ENCODE measurements at regions of chrX and their contacts with region 1.

Region 1: GRCh38 chrX:40013266-40014195 is 84.2 kb downstream of the BCOR start:
- DNase-seq: peak; percentile 81
- ATAC-seq: peak; percentile 77

Region 2: GRCh38 chrX:39258331-39258730 is 755.2 kb before region 1 on chrX:
- intact Hi-C with region 1: no loop called
- DNase-seq: no peak
- ATAC-seq: peak; percentile 55

Region 3: GRCh38 chrX:40058719-40059118 is 45.2 kb after region 1 on chrX:
- intact Hi-C with region 1: no loop called
- DNase-seq: no peak
- ATAC-seq: no peak

Region 4: DNA sequence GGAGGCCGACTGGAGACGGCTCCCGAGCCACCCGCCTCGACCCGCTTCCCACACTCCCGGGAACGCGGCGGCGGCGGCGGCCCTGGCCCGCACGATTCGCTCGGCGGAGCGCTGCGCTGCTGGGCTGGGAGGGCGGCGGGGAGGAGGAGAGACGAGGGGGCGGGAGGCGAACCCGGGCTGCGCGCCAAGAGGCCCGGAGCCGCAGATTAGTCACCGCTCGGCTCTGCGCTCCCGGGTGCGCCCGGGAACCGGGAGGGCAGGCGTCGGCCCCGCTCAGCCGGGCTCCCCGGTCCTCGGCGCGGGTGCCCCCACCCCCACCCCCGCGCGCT is 95.4 kb after region 1 on chrX:
- intact Hi-C with region 1: loop called (anchors 10 kb)
- DNase-seq: peak; percentile 87
- ATAC-seq: peak; percentile 70

Region 5: GRCh38 chrX:41384041-41384705 is 1370.6 kb after region 1 on chrX:
- intact Hi-C with region 1: no loop called
- DNase-seq: peak; percentile 65
- ATAC-seq: peak; percentile 78

Measured in sciatic nerve (tissue), 2 donors.